ENCODE measurements at regions of chr20 and their contacts with region 1.

Region 1: DNA sequence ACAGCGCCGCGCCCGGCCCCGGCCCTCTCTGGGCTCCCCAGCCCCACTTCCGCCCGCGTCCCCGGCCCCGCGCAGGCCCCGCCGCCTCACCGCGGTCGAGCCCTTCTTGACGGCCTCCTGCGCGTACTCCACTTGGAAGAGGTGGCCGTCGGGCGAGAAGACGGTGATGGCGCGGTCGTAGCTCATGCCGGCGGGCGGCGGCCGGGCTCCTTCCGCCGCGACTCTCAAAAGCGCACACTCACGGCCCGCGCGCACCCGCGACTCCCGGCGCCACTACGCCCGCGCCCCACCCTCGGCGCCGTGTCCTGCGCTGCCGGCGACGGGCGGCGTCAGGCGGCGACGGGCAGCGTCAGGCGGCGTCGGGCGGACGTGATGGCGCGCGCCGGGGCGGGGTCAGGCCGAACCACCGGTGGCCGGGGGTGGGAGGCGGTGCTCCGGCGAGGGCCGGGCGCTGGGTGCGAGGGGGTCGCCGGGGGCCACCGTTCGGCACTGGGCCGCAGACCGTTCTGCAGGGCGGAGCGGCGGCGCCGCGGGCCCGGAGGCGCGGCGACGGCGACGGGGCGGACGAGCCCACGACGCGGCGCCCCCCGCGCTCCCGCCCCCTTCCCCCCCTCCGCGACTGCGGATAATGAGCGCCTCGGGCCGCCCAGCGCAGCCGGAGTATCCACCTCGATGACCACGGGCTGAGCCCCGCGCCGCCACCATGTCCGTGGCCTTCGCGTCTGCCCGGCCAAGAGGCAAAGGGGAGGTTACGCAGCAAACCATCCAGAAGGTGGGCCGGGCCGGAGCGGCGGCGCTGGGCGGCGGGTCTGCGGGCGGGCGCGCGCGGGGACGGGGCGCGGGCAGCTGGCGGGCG is at the starts of genes PSMA7 and SS18L1:
- DNase-seq: peak in 1 of 2 donors; percentile 91
- H3K4me3 ChIP-seq: peak within 1 kb of the TSS; percentile 91 to 99
- H3K27ac ChIP-seq: peak within 1 kb of the TSS; percentile 92 to 97
- H3K4me1 ChIP-seq: peaks cover 9 to 31% of the 10 kb centered on the region in 2 donors
- H3K27me3 ChIP-seq: no peaks in the 10 kb centered on the region
- CTCF ChIP-seq: peak in 1 of 3 experiments; percentile 6
- total RNA-seq, gene PSMA7: 301 TPM
- total RNA-seq, gene SS18L1: 39.8 TPM

Region 2: GRCh38 chr20:62174870-62175624 is 31.7 kb after region 1 on chr20:
- intact Hi-C with region 1: no loop called
- DNase-seq: no peak
- H3K4me3 ChIP-seq: no peak overlapping the region
- H3K27ac ChIP-seq: no peak overlapping the region
- H3K4me1 ChIP-seq: no peaks in the 10 kb centered on the region
- H3K27me3 ChIP-seq: no peaks in the 10 kb centered on the region
- CTCF ChIP-seq: no peak

Region 3: DNA sequence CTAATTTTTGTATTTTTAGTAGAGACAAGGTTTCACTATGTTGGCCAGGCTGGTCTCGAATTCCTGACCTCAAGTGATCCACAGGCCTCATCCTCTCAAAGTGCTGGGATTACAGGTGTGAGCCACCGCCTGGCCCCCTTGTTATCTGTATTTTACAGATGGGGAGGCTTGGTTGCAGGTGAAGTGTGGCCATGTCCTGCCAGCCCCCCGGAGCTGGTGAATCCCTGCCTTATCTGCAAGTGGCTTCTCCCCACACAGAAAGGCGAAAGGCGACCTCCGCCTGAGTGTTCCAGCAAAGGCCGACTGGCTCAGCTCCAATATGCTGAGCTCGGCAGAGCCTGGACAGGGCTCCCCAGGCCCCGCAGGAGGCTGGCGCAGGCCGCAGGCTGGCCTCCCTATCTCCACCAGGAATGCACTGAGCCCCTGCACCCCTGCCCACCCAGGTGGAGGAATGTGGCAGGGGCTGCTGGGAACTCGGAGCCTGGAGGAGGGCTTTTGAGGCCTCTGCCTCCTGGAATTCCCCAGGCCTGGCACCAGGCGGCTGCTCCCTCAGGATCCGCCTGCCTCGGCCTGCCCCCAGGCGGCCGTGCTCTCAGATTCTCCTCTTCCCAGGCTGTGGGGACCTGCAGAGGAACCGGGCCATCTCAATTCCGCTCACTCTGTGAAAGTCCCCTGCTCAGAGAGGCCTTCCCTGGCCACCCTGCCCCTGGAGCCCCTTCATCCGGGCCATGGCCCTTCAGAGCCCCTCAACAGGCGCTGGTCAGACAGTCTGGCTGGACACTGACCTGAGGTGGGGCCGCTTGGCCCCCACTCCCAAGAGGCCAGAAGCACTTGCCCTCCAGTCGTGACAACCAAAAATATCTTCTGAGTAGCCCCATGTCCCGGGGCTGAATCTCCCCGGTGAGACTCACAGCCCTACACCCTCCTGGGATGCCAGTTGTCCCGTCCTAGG is 233.0 kb after region 1 on chr20:
- intact Hi-C with region 1: loop called (anchors 10 kb)
- DNase-seq: no peak
- H3K4me3 ChIP-seq: no peak overlapping the region
- H3K27ac ChIP-seq: peak overlapping the region; percentile 46 to 71
- H3K4me1 ChIP-seq: peaks cover 16 to 48% of the 10 kb centered on the region in 2 donors
- H3K27me3 ChIP-seq: no peaks in the 10 kb centered on the region
- CTCF ChIP-seq: peak; percentile 65 to 84 (median 71)

Measured in ascending aorta (tissue), 2 donors.